Activated T-helper 1 cell treated with anti-CD3 and anti-CD28 coated beads, Interleukin-12 subunit alpha, Interleukin-12 subunit beta, Interleukin-2, Interleukin-4 antibody, amounts not matched to agents 30 ng/mL and 10 ng/mL and 1 ng/mL, durations not matched to agents 14 hours and 24 hours and 36 hours (primary cell): ENCODE measurements at regions of chr5 and their contacts with region 1.

Region 1: GRCh38 chr5:150000256-150000989 is at the starts of genes HMGXB3 and TIGD6:
- DNase-seq: peak; percentile 82
- H3K4me3 Mint-ChIP-seq: peak within 1 kb of the TSS; percentile 99
- H3K27ac Mint-ChIP-seq: peak within 1 kb of the TSS; percentile 98
- H3K4me1 Mint-ChIP-seq: peaks cover 52% of the 10 kb centered on the region
- H3K27me3 Mint-ChIP-seq: no peaks in the 10 kb centered on the region
- total RNA-seq, gene HMGXB3: 49.1 and 49.9 TPM in 2 replicates
- total RNA-seq, gene TIGD6: 2.4 TPM in 2 replicates

Region 2: DNA sequence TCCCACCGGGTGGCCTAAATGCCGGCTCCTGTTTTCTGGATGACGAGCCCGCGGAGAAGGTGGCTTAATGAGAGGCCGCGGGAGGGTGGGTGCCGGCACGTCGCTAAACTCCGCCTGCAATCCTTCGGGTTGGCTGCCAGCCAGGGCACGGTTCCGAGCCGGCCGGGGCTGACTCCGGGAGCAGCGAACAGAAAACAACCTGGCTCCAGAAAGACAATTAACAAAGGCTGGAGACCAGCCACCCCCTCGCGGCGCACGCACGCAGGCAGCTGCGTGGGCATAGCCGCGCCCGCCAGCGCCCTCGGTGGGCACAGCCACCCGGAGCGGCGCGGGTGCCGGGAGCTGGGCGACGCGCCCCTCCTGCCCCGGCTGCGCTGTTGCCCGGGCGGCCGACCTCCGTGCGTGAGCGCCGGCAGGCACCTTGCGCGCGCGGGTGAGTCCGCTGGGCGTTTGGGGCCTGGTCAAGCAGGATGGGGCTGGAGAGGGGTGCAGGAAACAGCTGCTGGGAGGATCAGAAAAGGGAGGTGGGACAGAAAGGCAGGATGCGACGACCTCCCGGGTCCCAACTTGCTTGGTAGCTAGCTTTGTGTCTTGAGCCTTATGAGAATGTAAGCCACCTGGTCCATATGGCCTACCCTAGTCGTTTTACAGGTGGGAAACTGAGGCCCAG is 419.1 kb before region 1 on chr5 and contains the start of gene ARHGEF37:
- intact Hi-C with region 1: loop called (anchors 2 kb)
- DNase-seq: peak; percentile 13
- H3K4me3 Mint-ChIP-seq: peak within 1 kb of the TSS; percentile 75
- H3K27ac Mint-ChIP-seq: peak within 1 kb of the TSS; percentile 40
- H3K4me1 Mint-ChIP-seq: peaks cover 20% of the 10 kb centered on the region
- H3K27me3 Mint-ChIP-seq: peaks cover 8% of the 10 kb centered on the region
- total RNA-seq, gene ARHGEF37: 0.70 and 0.86 TPM in 2 replicates

Region 3: GRCh38 chr5:149731639-149732323 is 268.6 kb before region 1 on chr5:
- intact Hi-C with region 1: loop called (anchors 2 kb)
- DNase-seq: peak; percentile 35
- H3K4me3 Mint-ChIP-seq: peak overlapping the region; percentile 86
- H3K27ac Mint-ChIP-seq: peak overlapping the region; percentile 40
- H3K4me1 Mint-ChIP-seq: peaks cover 5% of the 10 kb centered on the region
- H3K27me3 Mint-ChIP-seq: peaks cover 5% of the 10 kb centered on the region

Region 4: DNA sequence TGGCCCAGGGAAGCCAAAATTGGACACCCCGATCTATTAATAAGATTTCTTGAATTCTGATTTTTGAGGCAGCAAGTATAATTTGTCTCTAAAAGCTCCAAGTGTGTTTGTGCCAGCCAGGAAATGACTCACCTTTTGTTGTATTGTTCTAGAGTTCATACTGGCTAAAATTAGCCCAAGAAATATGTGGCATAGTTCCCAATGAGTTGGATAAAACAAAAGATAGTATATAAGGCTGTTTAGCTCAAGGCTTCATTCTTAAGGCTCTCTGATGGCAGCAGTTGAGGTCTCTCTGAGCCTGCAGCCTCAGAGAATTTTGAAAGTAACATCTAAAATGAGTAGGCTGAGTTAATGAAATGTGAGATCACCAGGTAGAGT is 21.7 kb after region 1 on chr5:
- intact Hi-C with region 1: no loop called
- DNase-seq: no peak
- H3K4me3 Mint-ChIP-seq: no peak overlapping the region
- H3K27ac Mint-ChIP-seq: peak overlapping the region; percentile 46
- H3K4me1 Mint-ChIP-seq: peaks cover 37% of the 10 kb centered on the region
- H3K27me3 Mint-ChIP-seq: no peaks in the 10 kb centered on the region

Region 5: DNA sequence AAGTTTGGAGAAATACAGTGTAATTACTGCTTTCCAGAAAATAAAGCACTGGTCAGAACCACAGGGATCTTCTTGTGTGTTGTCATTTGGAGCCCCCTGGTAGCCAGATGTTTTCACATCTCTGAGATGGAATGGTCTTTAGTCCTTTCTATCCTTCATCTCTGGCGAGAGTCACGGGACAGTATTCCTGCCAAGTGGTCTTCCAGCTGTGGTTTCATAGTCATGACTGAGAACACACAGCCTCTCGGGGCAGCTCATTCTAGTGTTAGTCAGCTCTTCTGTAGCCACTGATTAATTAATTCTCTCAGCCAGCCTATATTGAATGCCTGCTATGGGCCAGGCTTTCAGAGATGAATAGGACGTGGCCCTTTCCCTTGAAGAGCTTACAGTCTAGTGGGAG is 34.2 kb after region 1 on chr5:
- intact Hi-C with region 1: loop called (anchors 2 kb)
- DNase-seq: no peak
- H3K4me3 Mint-ChIP-seq: no peak overlapping the region
- H3K27ac Mint-ChIP-seq: no peak overlapping the region
- H3K4me1 Mint-ChIP-seq: peaks cover 2% of the 10 kb centered on the region
- H3K27me3 Mint-ChIP-seq: no peaks in the 10 kb centered on the region

Region 6: DNA sequence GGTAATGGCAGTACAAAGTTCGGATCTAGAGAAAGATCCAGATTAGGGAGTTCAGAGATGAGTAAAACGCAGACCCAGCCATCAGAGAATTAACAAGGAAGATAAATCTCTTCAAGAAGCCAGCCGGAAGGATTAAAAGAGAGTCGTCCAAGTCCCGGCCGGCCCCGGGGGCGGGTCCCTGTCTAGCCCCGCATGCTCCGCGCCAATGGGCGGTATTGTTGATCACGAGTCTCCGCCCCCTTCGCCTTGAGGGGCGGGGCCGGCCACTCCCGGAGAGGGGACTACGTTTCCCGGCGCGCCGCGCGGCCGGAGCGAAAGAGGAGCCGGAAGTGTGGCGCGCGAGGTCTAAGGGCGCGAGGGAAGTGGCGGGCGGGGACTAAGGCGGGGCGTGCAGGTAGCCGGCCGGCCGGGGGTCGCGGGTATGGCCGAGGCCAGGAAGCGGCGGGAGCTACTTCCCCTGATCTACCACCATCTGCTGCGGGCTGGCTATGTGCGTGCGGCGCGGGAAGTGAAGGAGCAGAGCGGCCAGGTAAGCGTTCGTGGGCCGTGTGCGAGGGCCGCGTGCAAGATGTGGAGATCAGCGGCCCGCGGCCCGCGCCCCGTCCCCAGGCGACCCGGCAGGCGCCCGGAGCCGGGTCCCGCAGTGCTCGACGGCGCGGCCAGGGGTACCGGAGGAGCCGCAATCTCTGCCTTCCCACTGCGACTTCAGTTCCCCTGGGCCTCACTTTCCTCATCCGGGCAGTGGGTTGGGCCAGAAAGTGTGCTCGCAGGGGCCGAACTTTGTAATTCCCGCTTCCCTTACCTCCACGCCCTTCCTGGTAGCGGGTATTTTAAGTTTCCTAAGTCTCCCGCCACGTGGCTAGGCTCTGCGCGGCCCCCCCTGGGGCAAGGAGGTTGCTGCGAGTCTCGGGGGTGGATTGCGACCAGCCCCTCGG is 357.2 kb after region 1 on chr5 and contains the start of gene TCOF1:
- intact Hi-C with region 1: loop called (anchors 1 kb)
- DNase-seq: peak; percentile 97
- H3K4me3 Mint-ChIP-seq: peak within 1 kb of the TSS; percentile 93
- H3K27ac Mint-ChIP-seq: peak within 1 kb of the TSS; percentile 91
- H3K4me1 Mint-ChIP-seq: peaks cover 39% of the 10 kb centered on the region
- H3K27me3 Mint-ChIP-seq: no peaks in the 10 kb centered on the region
- total RNA-seq, gene TCOF1: 130 and 131 TPM in 2 replicates

Region 7: DNA sequence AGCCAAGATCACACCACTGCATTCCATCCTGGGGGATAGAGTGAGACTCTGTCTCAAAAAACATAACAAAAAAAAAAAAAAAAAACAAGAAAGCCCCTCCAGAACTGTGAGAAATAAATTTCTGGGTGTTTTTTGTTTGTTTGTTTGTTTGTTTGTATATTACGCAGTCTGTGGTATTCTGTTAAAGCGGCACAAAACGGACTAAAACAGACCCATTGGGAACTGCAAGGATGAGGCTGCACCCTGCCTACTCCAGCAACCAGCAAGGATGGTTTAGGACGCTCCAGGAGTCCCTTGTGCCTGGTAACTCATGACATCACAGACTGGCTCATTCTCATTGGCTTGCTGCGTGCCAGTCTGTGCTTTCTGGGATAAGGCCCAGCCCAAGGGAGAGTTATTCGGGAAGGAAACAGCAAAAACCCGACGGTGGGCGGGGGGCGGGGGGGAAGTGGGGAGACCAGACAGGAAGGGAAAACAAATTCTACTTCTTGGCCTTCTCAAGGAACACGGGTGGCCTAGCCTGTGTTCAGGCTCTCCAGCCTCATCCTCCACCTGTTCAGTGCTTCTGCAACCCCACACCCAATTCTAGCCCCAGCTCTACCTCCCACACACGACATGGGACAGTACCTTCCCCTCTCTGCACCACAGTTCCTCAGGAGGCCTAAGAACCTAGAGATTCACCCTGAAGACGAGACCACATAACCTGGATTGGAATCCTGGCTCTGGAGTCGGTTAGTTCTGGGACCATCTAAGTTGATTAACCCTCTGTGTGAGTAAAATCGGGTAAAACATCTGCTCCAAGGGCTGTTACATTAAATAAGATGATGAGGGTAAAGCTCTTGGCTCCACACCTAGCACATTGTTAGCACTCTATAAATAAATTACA is 409.5 kb after region 1 on chr5:
- intact Hi-C with region 1: loop called (anchors 2 kb)
- DNase-seq: peak; percentile 38
- H3K4me3 Mint-ChIP-seq: peak overlapping the region; percentile 91
- H3K27ac Mint-ChIP-seq: peak overlapping the region; percentile 98
- H3K4me1 Mint-ChIP-seq: peaks cover 45% of the 10 kb centered on the region
- H3K27me3 Mint-ChIP-seq: no peaks in the 10 kb centered on the region